ENCODE measurements at regions of chr22 and their contacts with region 1.

Region 1: GRCh38 chr22:19122143-19122751 is at the start of gene DGCR2:
- DNase-seq: peak; percentile 97 to 98
- ATAC-seq: peak; percentile 97 to 99 (median 98)
- H3K4me3 ChIP-seq: peak within 1 kb of the TSS; percentile 62 to 98 (median 88)
- H3K27ac ChIP-seq: peak within 1 kb of the TSS; percentile 88 to 96 (median 94)
- H3K4me1 ChIP-seq: peaks cover 32 to 51% (median 46%) of the 10 kb centered on the region in 9 donors
- H3K27me3 ChIP-seq: no peaks in the 10 kb centered on the region
- CTCF ChIP-seq: peak in 1 of 9 donors; percentile 4
- total RNA-seq, gene DGCR2: 27.0 to 58.0 (median 42.2) TPM

Region 2: DNA sequence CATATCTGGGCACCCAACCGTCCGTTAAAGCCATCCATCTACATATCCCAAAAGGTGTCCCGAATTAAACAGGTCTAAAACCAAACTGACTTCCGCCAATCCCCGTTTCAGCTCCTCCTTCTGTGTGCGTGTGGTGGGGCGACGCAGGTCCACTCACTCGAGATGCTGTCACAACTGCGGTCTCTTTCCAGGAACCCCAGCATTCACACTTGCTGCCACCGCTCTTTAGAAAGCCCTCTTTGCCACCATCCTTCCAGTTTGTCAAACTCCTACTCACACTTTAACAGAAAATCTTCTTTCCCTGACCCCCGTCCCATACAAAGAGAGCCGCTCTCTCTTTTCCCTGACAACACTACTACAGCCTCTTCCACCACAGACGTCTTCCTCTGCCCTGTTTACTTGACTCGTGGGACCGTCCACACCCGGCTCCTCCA is 21.7 kb after region 1 on chr22:
- intact Hi-C with region 1: loop called in 3 of 10 experiments (anchors 1 to 2 kb)
- DNase-seq: no peak
- ATAC-seq: peak in 1 of 8 donors; percentile 2
- H3K4me3 ChIP-seq: peak overlapping the region; percentile 69 to 98 (median 84)
- H3K27ac ChIP-seq: peak overlapping the region in 9 of 10 donors; percentile 56 to 87 (median 73)
- H3K4me1 ChIP-seq: peaks cover under 1 to 18% (median 13%) of the 10 kb centered on the region in 9 donors
- H3K27me3 ChIP-seq: peaks cover 9 to 22% (median 12%) of the 10 kb centered on the region in 7 donors
- CTCF ChIP-seq: no peak

Measured in heart right ventricle (tissue), 16 donors.